T-cell (primary cell): ENCODE measurements at regions of chr4 and their contacts with region 1.

Region 1: DNA sequence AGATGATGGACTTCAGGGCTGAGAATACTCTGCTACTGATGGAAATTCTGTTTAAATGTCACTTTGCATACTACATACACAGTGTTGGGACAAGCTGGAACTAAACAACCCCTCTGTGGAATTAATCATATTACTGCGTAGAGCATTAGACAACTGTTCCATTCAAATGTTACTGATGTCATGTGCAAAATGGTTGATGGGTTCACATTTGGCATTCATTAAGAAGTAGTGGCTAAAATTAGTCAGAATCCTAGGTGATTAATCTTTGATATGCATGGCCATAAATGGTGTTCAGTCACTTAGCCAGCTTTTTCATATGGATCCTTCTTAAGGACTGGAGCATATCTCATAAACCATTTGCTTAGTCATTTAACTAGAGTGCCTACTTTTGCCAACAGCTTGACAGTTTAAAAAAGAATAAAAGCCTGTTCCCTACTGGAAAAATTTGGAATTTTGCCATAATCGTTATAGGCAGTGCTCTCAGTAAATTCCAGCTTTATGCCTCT is 105.2 kb downstream of the RNF150 start:
- DNase-seq: no peak
- ATAC-seq: no peak
- H3K4me3 ChIP-seq: no peak overlapping the region
- H3K4me3 Mint-ChIP-seq: no peak overlapping the region
- H3K27ac ChIP-seq: no peak overlapping the region
- H3K27ac Mint-ChIP-seq: no peak overlapping the region
- H3K4me1 ChIP-seq: no peaks in the 10 kb centered on the region
- H3K4me1 Mint-ChIP-seq: no peaks in the 10 kb centered on the region
- H3K27me3 ChIP-seq: no peaks in the 10 kb centered on the region
- H3K27me3 Mint-ChIP-seq: peaks cover 0 to 2% of the 10 kb centered on the region in 2 donors

Region 2: DNA sequence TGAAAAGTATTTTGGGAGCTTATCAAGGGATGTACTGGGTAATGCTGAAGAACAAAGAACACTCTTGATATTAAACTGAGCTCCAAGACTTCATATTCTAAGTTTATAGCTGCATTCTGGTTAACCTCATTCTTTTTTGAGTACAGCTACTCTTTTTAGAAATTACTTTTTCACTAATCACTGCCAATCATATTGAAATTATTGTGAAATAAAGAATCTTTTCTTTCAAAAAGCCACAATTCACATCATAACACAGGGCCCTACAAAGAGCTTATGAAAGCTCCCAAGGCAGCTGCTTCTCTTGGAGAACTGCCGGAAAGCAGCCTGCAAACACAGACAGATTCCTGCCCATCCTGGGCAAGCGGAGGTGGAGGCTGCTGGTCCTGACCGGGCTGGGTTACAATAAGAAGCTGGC is 16.2 kb before region 1 on chr4:
- CTCF ChIA-PET with region 1: interaction called in 1 of 2 experiments, 11 read pairs
- POLR2A ChIA-PET with region 1: no interaction called
- DNase-seq: no peak
- ATAC-seq: no peak
- H3K4me3 ChIP-seq: no peak overlapping the region
- H3K4me3 Mint-ChIP-seq: no peak overlapping the region
- H3K27ac ChIP-seq: no peak overlapping the region
- H3K27ac Mint-ChIP-seq: no peak overlapping the region
- H3K4me1 ChIP-seq: no peaks in the 10 kb centered on the region
- H3K4me1 Mint-ChIP-seq: no peaks in the 10 kb centered on the region
- H3K27me3 ChIP-seq: no peaks in the 10 kb centered on the region
- H3K27me3 Mint-ChIP-seq: no peaks in the 10 kb centered on the region